Activated naive CD4-positive, alpha-beta T cell treated with anti-CD3 and anti-CD28 coated beads for 36 hours (primary cell): ENCODE measurements at regions of chr3 and their contacts with region 1.

Region 1: DNA sequence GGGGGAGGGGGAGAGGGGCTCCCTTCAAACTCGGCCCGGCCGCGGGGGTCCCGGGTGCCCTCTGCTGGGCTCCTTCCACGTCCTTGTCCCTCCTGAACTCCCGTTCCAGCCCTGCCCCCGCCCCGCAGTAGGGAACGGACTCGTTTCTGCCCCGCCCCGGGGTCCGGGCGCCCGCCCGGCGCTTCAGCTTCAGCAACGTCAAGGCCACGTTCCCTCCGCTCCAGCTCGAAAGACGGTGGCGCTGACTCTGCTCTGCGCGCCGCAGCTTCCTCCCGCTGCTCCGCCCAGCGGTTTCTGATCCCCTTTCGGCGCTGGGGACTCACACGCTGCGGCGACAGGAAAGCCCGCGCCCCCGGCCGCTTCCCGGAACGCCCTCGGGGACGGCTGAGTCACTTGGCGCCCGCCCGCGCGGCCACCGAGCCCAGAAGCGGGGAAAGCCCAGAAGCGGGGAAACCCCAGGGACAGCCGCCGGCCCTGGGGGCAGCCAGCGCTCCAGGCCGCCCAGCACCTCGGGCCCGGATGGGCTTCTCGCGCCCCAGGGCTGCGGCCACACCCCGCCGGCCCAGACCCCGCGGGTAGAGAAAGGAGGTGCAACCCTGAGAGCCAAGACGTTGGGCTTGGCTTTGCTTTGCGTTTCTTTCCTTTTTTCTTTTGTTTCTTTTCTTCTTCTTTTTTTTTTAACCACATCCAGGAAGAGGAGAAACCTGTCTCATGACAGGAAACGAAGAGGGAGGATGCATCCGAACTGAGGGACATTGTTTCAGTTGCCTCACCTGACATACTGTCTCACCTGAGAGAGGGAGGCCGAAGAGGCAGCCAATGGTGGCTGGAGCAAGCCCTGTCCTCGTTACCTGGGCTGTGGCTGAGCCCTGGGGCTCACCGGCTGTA is 28.9 kb downstream of the ARHGAP31 start:
- DNase-seq: peak; percentile 96
- H3K4me3 Mint-ChIP-seq: peak overlapping the region; percentile 83
- H3K27ac Mint-ChIP-seq: peak overlapping the region; percentile 94
- H3K4me1 Mint-ChIP-seq: peaks cover 47% of the 10 kb centered on the region
- H3K27me3 Mint-ChIP-seq: no peaks in the 10 kb centered on the region

Region 2: GRCh38 chr3:119279101-119279554 is 44.0 kb before region 1 on chr3:
- CTCF ChIA-PET with region 1: no interaction called
- intact Hi-C with region 1: loop called (anchors 5 kb)
- DNase-seq: no peak
- H3K4me3 Mint-ChIP-seq: no peak overlapping the region
- H3K27ac Mint-ChIP-seq: no peak overlapping the region
- H3K4me1 Mint-ChIP-seq: peaks cover 19% of the 10 kb centered on the region
- H3K27me3 Mint-ChIP-seq: no peaks in the 10 kb centered on the region

Region 3: DNA sequence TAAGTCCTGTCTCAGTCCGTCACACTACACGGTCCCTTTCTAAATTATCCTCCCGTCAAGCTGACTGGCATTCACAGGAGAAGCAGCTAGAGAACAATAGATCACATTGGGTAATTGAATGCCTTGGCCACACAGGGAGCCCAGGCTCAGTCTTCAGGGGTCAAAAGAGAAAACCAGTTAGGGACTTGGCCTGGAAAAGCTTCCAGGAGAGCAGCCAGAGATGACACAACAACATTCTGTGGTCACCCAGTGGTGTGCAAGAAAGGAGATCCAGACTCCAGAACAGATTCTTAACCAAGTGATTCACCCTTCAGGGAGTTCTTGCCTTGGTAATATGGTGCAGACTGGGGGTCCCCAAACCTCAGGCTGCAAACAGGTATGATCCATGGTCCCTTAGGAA is 13.0 kb before region 1 on chr3:
- CTCF ChIA-PET with region 1: interaction called, 3 read pairs
- intact Hi-C with region 1: loop called (anchors 1 kb)
- DNase-seq: no peak
- H3K4me3 Mint-ChIP-seq: no peak overlapping the region
- H3K27ac Mint-ChIP-seq: no peak overlapping the region
- H3K4me1 Mint-ChIP-seq: peaks cover 15% of the 10 kb centered on the region
- H3K27me3 Mint-ChIP-seq: no peaks in the 10 kb centered on the region

Region 4: DNA sequence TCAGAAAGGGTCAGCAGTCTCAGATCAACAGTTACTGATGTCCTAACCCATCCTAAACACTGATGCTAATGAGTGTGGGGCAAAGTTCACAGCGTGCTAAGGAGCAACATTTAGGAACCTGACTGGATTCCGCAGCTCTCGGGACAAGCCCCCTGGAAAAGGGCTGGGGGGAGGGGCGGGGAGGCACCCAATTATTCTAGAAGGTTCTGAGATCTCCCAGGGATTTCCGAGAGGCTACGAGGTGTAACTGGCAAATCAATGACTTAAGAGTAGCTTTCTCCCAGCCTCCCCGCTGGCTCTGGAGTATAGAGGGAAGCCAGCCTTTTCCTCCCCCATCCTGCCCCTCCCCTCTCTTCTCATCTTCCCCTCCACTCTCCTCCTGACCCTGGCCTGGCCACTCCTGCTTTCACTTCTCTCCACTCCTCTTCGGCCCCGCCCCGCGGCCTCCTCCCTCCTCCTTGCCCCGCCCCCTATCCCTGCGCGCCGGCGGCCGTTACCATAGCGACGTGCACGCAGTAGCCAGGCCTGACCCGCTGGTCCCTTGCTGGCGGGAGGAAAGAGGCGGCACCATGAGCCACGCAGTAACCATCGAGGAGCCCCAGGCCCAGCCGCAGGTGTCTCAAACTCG is 379.6 kb after region 1 on chr3 and contains the start of gene CFAP91:
- CTCF ChIA-PET with region 1: no interaction called
- intact Hi-C with region 1: loop called (anchors 1 kb)
- DNase-seq: peak; percentile 83
- H3K4me3 Mint-ChIP-seq: peak within 1 kb of the TSS; percentile 72
- H3K27ac Mint-ChIP-seq: no peak within 1 kb of the TSS
- H3K4me1 Mint-ChIP-seq: peaks cover 45% of the 10 kb centered on the region
- H3K27me3 Mint-ChIP-seq: peaks cover 2% of the 10 kb centered on the region
- total RNA-seq, gene CFAP91: 0.26 to 0.57 TPM

Region 5: GRCh38 chr3:120263792-120264191 is 940.7 kb after region 1 on chr3:
- CTCF ChIA-PET with region 1: no interaction called
- intact Hi-C with region 1: no loop called
- DNase-seq: no peak
- H3K4me3 Mint-ChIP-seq: no peak overlapping the region
- H3K27ac Mint-ChIP-seq: no peak overlapping the region
- H3K4me1 Mint-ChIP-seq: no peaks in the 10 kb centered on the region
- H3K27me3 Mint-ChIP-seq: peaks cover 5% of the 10 kb centered on the region